Activated naive CD4-positive, alpha-beta T cell treated with anti-CD3 and anti-CD28 coated beads for 36 hours (primary cell): ENCODE measurements at regions of chr1 and their contacts with region 1.

Region 1: DNA sequence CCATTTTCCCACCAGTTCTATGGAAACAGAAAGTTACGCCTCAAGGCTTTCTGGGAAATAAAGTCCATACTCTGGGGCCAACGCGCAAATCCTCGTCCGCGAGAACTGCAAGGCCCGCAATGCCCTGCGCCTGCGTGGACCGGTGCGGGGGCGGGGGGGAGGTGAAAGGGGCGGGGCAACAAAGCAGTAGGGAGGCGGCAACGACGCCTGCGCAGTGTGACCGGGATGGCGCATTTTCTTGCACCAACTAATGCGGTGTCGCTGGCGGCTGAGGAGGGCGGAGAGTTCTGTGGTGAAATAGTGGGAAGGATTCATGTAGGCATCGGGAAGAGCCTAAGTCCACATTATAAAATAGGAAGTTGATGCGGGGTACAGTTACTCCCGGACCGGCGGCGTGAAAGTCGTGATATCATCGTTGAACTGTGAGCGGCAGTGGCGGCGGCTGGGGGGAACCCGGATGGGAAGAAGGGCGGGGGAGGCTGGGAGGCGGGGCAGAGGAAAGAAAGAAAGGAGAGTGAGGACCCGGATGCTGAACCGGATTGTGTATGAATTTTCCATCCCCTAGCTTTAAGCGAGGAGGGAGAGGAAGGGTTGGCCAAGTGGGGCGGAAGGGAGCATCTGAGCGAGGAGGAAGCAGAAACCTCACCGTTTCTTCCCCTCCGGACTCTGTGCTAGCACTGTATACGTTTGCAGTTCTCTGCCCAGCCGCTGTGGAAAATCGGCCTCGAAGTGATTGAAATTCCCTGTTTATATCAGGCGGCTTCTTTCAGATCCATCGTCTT is at the start of gene GGPS1:
- DNase-seq: peak; percentile 99
- H3K4me3 Mint-ChIP-seq: no peak within 1 kb of the TSS
- H3K27ac Mint-ChIP-seq: peak within 1 kb of the TSS; percentile 94
- H3K4me1 Mint-ChIP-seq: peaks cover 31% of the 10 kb centered on the region
- H3K27me3 Mint-ChIP-seq: no peaks in the 10 kb centered on the region
- total RNA-seq, gene GGPS1: 35.3 to 36.9 TPM

Region 2: DNA sequence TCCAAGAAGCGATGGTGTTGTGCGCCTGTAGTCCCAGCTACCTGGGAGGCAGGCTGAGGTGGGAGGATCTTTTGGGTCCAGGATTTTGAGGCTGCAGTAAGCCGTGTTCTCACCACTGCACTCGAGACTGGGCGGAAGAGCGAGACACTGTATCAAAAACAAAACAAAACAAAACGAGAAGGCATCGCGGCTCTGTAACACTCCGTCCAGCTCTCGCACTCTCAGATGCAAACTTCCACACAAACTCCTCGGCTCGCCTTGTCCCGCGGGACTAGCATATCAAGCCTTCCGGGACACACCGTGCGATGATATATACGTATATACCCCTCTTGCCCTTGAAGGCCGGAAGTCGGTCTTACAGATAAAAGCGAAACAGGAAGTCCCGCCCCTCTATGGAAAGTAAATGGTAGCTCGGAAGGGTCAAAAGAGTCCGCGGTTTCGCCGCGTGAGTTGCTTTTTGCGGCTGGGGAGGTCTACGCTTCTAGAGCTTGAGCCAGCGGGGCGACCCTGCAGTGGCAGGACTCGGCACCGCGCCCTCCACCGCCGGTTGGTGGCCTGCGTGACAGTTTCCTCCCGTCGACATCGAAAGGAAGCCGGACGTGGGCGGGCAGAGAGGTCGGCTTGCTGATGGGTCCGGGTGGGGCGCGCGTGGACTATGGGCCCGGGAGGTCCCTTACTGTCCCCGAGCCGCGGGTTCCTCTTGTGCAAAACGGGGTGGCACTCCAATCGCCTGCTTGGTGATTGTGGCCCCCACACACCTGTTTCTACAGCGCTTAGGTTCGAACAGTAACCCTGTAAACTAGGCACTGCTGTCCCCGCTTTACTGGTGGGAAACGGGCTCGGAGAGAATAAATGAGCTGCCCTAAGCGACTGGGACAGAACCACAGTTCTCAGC is 955.2 kb before region 1 on chr1 and contains the start of gene COA6:
- CTCF ChIA-PET with region 1: no interaction called
- intact Hi-C with region 1: loop called (anchors 1 kb)
- DNase-seq: peak; percentile 90
- H3K4me3 Mint-ChIP-seq: peak within 1 kb of the TSS; percentile 96
- H3K27ac Mint-ChIP-seq: peak within 1 kb of the TSS; percentile 98
- H3K4me1 Mint-ChIP-seq: peaks cover 54% of the 10 kb centered on the region
- H3K27me3 Mint-ChIP-seq: no peaks in the 10 kb centered on the region
- total RNA-seq, gene COA6: 45.8 to 50.2 TPM

Region 3: GRCh38 chr1:234722904-234723720 is 605.4 kb before region 1 on chr1:
- CTCF ChIA-PET with region 1: no interaction called
- intact Hi-C with region 1: loop called (anchors 5 kb)
- DNase-seq: peak; percentile 91
- H3K4me3 Mint-ChIP-seq: peak overlapping the region; percentile 70
- H3K27ac Mint-ChIP-seq: peak overlapping the region; percentile 97
- H3K4me1 Mint-ChIP-seq: peaks cover 61% of the 10 kb centered on the region
- H3K27me3 Mint-ChIP-seq: no peaks in the 10 kb centered on the region

Region 4: DNA sequence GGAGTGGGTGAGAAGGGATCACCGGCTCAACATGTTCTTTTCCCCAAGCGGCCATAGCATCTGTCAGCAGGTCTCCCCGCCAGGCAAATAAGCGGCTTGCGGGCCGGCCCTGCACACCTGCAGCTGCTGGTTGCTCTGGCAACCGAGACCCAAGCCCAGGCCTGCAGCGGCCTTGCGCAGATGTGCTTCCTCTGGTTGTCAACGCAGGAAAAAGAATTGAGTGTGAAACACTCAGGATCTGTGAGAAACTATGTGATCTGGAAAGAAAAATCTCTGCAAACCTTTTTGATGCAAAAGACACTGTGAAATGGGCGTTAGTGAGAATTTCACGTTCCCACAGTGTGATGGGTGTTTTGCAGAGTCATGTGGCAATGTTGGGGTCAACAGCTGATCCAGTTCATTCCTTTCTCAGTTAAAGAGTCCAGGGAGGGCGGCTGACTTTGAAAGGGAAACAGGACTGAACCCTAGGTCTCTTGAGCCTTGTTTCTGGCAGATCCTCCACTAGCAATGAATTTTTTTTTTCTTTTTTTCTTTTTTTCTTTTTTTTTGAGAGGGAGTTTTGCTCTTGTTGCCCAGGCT is 228.3 kb before region 1 on chr1:
- CTCF ChIA-PET with region 1: interaction called, 3 read pairs
- intact Hi-C with region 1: loop called (anchors 5 kb)
- DNase-seq: no peak
- H3K4me3 Mint-ChIP-seq: no peak overlapping the region
- H3K27ac Mint-ChIP-seq: no peak overlapping the region
- H3K4me1 Mint-ChIP-seq: peaks cover 28% of the 10 kb centered on the region
- H3K27me3 Mint-ChIP-seq: no peaks in the 10 kb centered on the region

Region 5: DNA sequence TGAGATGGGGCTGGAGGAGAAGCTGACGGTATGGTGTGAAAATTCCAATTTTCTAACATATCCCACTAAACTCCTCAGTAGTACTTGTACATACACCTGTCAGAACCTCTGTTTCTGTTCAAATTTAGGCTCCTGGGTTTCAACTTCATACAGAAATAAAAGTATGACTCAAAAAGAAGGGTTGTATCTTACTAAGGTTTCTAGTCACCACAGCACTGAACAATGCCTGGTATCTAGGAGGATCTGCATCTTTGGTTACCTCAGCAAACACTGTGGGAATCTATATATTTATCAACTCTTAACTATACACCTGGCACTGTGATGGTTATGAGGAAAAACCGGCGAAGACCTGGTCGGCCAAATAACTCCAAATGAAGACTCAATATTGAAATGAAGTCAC is 181.3 kb before region 1 on chr1:
- CTCF ChIA-PET with region 1: no interaction called
- intact Hi-C with region 1: no loop called
- DNase-seq: no peak
- H3K4me3 Mint-ChIP-seq: no peak overlapping the region
- H3K27ac Mint-ChIP-seq: no peak overlapping the region
- H3K4me1 Mint-ChIP-seq: peaks cover 26% of the 10 kb centered on the region
- H3K27me3 Mint-ChIP-seq: no peaks in the 10 kb centered on the region

Region 6: DNA sequence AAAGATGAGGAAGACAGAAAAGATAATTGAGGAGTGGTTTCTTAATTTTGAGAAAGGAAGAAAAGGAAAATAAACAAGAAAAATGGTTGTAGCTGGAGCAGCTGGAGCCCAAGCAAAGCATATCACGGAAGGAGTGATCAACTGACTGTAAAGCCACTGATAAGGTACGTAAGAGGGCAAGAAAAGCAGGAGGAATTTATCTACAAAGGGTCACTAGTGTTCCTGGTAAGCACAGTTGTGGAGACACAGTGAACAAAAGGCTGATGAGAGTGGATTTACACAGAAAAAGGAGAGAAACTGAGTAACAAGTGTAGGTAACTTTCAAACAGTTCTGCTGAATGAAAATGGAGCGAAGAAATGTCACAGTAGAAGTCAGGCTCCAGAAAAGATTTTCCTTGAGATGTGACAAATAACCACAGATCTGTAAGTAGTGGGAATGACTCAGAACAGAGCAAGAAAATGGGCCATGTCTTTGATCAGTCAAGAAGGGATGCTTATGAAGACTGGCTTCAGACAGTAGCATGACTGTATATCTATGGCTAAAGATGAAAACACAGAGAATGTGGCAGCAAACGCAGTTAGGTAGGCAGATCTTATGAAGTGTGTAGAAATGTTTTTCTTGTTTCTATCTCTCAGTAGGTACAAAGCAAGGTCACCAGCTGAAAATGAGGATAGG is 121.9 kb before region 1 on chr1:
- CTCF ChIA-PET with region 1: no interaction called
- intact Hi-C with region 1: loop called (anchors 2 kb)
- DNase-seq: peak; percentile 35
- H3K4me3 Mint-ChIP-seq: peak overlapping the region; percentile 19
- H3K27ac Mint-ChIP-seq: peak overlapping the region; percentile 83
- H3K4me1 Mint-ChIP-seq: peaks cover 28% of the 10 kb centered on the region
- H3K27me3 Mint-ChIP-seq: no peaks in the 10 kb centered on the region

Region 7: GRCh38 chr1:235295902-235296376 is 32.6 kb before region 1 on chr1:
- CTCF ChIA-PET with region 1: interaction called, 3 read pairs
- intact Hi-C with region 1: loop called (anchors 1 kb)
- DNase-seq: no peak
- H3K4me3 Mint-ChIP-seq: no peak overlapping the region
- H3K27ac Mint-ChIP-seq: no peak overlapping the region
- H3K4me1 Mint-ChIP-seq: peaks cover 59% of the 10 kb centered on the region
- H3K27me3 Mint-ChIP-seq: no peaks in the 10 kb centered on the region

Region 8: GRCh38 chr1:235415008-235415904 is 86.7 kb after region 1 on chr1:
- CTCF ChIA-PET with region 1: interaction called, 17 read pairs
- intact Hi-C with region 1: loop called (anchors 1 kb)
- DNase-seq: peak; percentile 76
- H3K4me3 Mint-ChIP-seq: no peak overlapping the region
- H3K27ac Mint-ChIP-seq: no peak overlapping the region
- H3K4me1 Mint-ChIP-seq: peaks cover 4% of the 10 kb centered on the region
- H3K27me3 Mint-ChIP-seq: no peaks in the 10 kb centered on the region

Region 9: DNA sequence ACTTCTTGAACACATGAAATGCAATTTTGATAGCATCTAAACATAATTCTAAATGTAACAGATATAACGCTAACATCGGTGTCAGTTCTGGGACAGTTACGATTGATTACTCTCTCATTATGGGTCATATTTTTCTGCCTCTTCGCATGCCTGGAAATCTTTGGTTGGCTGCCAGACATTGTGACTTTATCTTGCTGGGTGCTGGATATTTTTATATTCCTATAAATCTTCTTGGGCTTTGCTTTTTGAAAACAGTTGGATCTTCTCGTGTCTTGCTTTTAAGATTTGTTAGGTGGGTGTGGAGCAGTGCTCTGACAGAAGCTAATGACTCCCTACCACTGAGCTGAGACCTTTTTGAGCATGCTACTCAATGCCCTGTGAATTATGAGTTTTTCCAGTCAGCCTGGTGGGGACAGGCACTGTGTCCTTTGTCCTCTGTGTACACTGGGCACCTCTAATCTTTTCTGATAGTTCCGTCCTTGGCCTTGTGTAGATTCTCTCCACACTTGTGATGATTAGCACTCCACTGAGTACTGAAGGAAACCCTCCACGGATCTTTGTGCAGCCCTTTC is 1037.5 kb after region 1 on chr1:
- CTCF ChIA-PET with region 1: no interaction called
- intact Hi-C with region 1: no loop called
- DNase-seq: no peak
- H3K4me3 Mint-ChIP-seq: no peak overlapping the region
- H3K27ac Mint-ChIP-seq: no peak overlapping the region
- H3K4me1 Mint-ChIP-seq: no peaks in the 10 kb centered on the region
- H3K27me3 Mint-ChIP-seq: no peaks in the 10 kb centered on the region